Endothelial cell of umbilical vein (primary cell): ENCODE measurements at regions of chr15 and their contacts with region 1.

Region 1: GRCh38 chr15:89171136-89172072 is 50.0 kb downstream of the RLBP1 start:
- DNase-seq: peak; percentile 65
- H3K4me3 ChIP-seq: no peak overlapping the region
- H3K27ac ChIP-seq: no peak overlapping the region
- H3K4me1 ChIP-seq: peaks cover 31% of the 10 kb centered on the region
- H3K27me3 ChIP-seq: no peaks in the 10 kb centered on the region
- CTCF ChIP-seq: peak; percentile 80 to 81
- POLR2A ChIP-seq: no peak

Region 2: DNA sequence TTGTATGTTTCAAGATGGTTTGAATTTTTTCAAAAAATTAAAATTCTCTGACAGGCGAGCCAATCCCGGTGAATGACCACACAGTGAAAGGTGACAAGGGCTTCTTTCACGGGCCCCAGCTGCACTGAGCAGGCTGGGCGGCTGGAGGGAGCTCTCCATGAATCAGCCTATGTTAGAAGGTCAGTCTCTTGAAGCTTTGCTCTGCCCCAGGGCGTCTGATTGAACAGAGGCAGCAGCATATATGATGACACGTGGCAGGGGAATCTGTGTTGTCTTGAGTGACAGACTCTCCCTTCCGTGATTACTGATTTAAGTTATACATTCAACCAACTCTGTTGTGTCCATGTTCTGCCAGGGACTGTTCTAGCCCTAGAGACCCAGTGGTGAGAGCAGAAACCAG is 481.1 kb before region 1 on chr15:
- CTCF ChIA-PET with region 1: no interaction called
- POLR2A ChIA-PET with region 1: no interaction called
- dilution Hi-C with region 1: no loop called
- intact Hi-C with region 1: no loop called
- DNase-seq: no peak
- H3K4me3 ChIP-seq: no peak overlapping the region
- H3K27ac ChIP-seq: no peak overlapping the region
- H3K4me1 ChIP-seq: no peaks in the 10 kb centered on the region
- H3K27me3 ChIP-seq: peaks cover 0 to 2% of the 10 kb centered on the region in 2 experiments
- CTCF ChIP-seq: no peak
- POLR2A ChIP-seq: no peak

Region 3: GRCh38 chr15:88904624-88905327 is 266.6 kb before region 1 on chr15:
- CTCF ChIA-PET with region 1: interaction called, 22 read pairs
- POLR2A ChIA-PET with region 1: no interaction called
- dilution Hi-C with region 1: no loop called
- intact Hi-C with region 1: no loop called
- DNase-seq: peak; percentile 78
- H3K4me3 ChIP-seq: no peak overlapping the region
- H3K27ac ChIP-seq: no peak overlapping the region
- H3K4me1 ChIP-seq: no peaks in the 10 kb centered on the region
- H3K27me3 ChIP-seq: no peaks in the 10 kb centered on the region
- CTCF ChIP-seq: peak; percentile 97 to 98
- POLR2A ChIP-seq: no peak

Region 4: DNA sequence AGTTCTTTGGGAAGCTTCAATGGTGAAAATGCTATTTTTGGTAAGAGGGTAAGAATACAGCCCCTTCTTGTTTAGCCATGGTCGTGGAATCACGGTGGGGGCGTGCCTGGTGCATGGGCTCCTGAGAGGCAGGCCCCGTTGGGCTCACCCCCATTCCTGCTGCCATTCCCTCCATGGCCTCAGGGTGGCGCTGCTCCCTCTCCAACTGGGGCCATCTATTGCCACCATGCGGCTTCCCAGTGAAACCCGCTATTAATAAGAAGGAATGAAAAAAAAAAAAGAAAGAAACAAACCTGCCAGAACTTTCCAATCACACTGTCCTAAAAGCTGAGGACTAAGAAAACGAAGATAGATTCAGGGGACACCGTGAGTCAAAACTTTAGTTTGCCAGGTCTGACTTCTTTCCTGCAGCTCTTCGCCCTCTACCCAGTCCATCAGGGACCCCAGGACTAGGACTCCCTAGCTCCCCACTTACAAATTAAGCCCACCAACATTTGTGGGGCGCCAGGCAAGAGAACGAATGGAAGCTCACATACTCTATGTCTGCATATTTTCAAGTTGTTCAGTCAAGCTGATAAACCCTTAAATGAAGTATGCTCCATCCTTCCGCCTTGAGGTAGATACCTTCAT is 113.8 kb before region 1 on chr15:
- CTCF ChIA-PET with region 1: interaction called, 198 read pairs
- POLR2A ChIA-PET with region 1: interaction called, 3 read pairs
- dilution Hi-C with region 1: loop called (anchors 25 kb)
- intact Hi-C with region 1: loop called (anchors 1 kb)
- DNase-seq: peak; percentile 79
- H3K4me3 ChIP-seq: no peak overlapping the region
- H3K27ac ChIP-seq: no peak overlapping the region
- H3K4me1 ChIP-seq: no peaks in the 10 kb centered on the region
- H3K27me3 ChIP-seq: no peaks in the 10 kb centered on the region
- CTCF ChIP-seq: peak; percentile 95 to 99
- POLR2A ChIP-seq: no peak

Region 5: GRCh38 chr15:89087830-89088604 is 83.4 kb before region 1 on chr15 and contains the start of gene ABHD2:
- CTCF ChIA-PET with region 1: interaction called, 63 read pairs
- POLR2A ChIA-PET with region 1: interaction called, 5 read pairs
- dilution Hi-C with region 1: no loop called
- intact Hi-C with region 1: loop called (anchors 1 kb)
- DNase-seq: peak; percentile 100
- H3K4me3 ChIP-seq: peak within 1 kb of the TSS; percentile 5 to 63 (median 36)
- H3K27ac ChIP-seq: peak within 1 kb of the TSS; percentile 71
- H3K4me1 ChIP-seq: peaks cover 42% of the 10 kb centered on the region
- H3K27me3 ChIP-seq: no peaks in the 10 kb centered on the region
- CTCF ChIP-seq: no peak
- POLR2A ChIP-seq: no peak
- total RNA-seq, gene ABHD2: 52.3 and 62.2 TPM in 2 replicates

Region 6: DNA sequence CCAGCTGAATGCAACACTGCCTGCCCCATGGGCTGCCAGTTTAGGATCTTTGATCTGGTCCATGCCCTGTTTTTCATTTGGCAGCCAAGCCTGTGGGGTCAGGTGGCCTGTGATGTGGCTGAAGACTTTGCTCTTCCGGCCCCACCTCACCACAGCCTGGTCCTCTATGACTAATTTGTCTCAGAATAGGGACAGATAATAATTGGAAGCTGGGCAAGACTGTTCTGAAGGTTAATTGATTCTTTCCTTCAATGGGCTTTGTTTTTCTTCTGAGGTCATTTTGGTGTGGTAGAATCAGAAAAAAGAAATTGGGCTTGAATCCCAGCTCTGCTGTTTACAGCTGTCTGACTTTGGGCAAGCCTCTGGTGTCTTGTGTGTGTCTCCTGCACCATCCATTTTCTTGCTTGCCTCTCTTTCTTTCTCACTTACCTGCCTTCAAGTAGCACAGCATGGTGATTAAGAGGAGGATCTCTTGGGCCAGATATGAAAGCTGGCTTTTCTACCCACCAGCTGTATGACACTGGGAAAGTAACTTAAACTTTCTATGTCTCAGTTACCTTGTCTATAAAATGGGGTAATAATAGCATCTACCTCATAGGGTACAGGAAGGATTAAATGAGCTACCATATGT is 58.9 kb before region 1 on chr15:
- CTCF ChIA-PET with region 1: interaction called, 14 read pairs
- POLR2A ChIA-PET with region 1: no interaction called
- dilution Hi-C with region 1: no loop called
- intact Hi-C with region 1: no loop called
- DNase-seq: peak; percentile 73
- H3K4me3 ChIP-seq: no peak overlapping the region
- H3K27ac ChIP-seq: peak overlapping the region; percentile 62
- H3K4me1 ChIP-seq: peaks cover 16% of the 10 kb centered on the region
- H3K27me3 ChIP-seq: no peaks in the 10 kb centered on the region
- CTCF ChIP-seq: no peak
- POLR2A ChIP-seq: no peak

Region 7: DNA sequence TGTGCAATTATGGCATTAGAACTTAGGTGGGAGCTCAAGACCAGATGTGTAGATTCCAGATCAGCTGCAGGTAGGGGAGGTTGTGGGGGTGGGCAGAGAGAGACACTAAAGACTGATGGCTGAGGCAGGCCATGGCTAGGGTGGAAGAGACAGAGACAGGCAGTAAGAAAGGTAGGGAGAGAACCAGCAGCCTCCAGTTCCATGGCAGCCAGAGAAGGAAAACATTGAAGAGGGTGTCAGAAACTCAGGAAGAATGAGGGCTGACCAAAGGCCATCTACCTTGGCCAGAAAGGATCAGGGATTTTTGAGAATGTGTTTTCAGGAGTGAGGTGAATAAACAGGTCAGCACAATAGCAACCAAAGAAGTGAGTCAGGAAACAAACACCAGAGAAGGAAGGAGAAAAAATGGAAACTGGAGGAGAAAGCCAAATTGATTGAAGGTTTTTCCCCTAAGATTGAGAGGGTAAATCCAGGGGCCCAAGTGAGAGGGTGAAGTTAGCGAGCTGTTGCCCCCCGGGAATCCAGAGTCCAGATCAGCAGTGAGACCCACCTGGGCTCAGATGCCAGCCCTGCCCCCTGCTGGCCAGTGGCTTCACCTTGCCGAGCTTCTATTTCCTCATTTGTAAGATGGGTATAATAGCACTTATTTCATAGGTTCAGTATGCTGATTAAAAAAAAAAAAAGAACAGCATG is 42.1 kb before region 1 on chr15:
- CTCF ChIA-PET with region 1: interaction called, 32 read pairs
- POLR2A ChIA-PET with region 1: no interaction called
- dilution Hi-C with region 1: no loop called
- intact Hi-C with region 1: loop called (anchors 1 kb)
- DNase-seq: peak; percentile 62
- H3K4me3 ChIP-seq: no peak overlapping the region
- H3K27ac ChIP-seq: peak overlapping the region; percentile 52
- H3K4me1 ChIP-seq: peaks cover 41% of the 10 kb centered on the region
- H3K27me3 ChIP-seq: no peaks in the 10 kb centered on the region
- CTCF ChIP-seq: peak; percentile 67 to 78
- POLR2A ChIP-seq: no peak

Region 8: DNA sequence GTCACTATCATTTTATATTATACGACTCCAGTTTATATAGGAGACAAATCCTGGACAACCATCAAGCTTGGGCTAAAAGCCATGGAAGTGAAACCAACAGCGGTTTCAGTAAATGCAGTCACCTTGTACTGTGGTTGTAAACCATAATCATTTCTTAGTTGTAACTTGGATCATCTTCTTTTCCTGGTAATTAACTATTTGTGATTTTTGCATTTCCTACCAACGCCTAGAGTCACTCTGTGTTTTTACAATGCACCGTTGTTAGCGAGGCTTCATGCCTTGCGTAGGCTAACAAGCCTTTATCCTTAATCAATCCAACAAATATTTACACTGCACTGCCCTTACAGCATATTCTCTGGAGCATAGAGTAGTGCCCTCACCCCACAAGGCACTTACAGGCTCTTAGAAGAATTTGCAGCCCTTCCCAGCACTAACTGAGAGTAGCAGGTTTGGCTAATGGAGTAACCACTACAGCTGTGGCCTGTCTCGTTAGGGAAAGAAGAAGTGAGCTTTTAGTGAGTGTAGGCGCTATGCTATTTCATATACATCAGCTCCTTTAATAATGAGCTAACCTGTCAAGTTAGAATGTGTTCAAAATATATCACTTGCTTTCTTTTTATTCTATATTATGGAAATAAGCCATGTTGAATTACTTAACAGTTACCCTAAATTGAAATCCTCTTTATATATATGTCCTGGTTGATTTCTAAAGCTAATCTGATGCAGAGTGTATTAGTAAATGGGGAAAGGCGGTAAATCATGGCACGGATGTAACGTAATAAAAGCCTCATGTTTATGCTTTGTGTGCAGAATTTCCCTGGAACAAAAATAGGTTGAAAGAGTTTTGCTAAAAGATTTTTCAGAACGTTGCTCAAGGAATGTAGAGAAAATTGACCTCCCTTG is 20.4 kb before region 1 on chr15:
- CTCF ChIA-PET with region 1: interaction called, 23 read pairs
- POLR2A ChIA-PET with region 1: no interaction called
- dilution Hi-C with region 1: no loop called
- intact Hi-C with region 1: no loop called
- DNase-seq: no peak
- H3K4me3 ChIP-seq: no peak overlapping the region
- H3K27ac ChIP-seq: no peak overlapping the region
- H3K4me1 ChIP-seq: peaks cover 8% of the 10 kb centered on the region
- H3K27me3 ChIP-seq: no peaks in the 10 kb centered on the region
- CTCF ChIP-seq: no peak
- POLR2A ChIP-seq: no peak